GM13976 (cell line): ENCODE measurements at regions of chr3 and their contacts with region 1.

Region 1: GRCh38 chr3:33787328-33788009 is 11.0 kb upstream of the PDCD6IP start:
- DNase-seq: peak; percentile 55
- CTCF ChIP-seq: peak; percentile 75

Region 2: DNA sequence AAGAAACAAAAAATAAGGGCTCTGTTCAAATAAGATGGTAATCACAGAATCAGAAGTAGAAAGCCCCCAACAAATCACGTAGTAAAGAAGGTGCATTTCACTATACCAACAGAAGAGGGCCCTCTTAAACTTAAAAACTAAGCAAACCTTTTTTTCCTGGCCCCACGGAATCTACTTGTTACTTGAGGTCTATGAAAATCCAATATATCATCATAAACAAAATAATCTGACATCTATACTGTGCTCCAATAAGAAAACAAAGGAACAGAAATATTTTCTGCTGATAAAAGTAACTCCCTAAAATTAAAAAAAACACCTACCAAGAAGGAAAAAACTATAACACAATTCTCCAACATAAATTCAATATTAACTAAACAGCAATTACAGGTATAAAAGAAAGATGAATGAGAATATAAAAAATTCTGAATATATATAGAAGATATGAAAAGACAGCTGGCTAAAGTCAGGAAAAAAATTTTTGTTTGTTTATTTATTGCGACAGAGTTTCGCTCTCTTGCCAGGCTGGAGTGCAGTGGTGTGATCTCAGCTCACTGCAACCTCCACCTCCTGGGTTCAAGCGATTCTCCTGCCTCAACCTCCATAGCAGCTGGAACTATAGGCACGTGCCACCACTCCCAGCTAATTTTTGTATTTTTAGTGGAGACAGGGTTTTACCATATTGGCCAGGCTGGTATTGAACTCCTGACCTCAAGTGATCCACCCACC is 151.2 kb before region 1 on chr3:
- in situ Hi-C with region 1: loop called (anchors 10 kb)
- DNase-seq: peak; percentile 39
- CTCF ChIP-seq: peak; percentile 22

Region 3: DNA sequence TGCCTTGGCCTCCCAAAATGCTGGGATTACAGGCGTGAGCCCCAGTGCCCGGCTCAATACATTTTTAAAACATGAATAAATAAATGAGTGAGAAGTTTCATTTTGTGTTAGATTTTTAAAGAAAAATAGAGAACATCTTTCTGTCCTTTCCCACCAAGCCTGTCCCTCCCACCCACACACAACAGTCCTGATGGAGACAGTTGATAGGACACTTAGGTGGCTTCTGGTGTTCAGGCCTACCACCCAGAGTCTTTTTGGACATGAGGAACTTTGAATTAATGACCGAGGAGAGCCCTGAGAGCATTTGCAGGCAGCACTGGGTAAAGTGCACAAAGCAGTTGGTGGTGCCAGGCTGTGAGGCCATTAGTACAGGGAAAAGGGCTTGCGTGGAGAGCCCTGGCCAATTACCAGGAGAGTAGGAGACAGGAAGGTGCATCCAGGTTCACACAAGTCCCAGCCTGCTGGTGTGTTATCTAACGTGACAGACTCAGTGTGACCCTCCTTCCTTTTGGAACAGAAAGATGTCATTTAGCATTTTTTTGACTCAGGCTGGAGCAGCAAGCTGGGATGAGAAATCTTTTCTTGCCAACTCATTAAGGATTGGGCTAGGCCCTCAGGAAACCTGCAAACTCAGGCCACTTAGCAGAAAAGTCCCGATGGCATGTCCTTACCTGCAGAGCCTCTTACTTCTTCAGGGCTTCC is 114.5 kb after region 1 on chr3:
- in situ Hi-C with region 1: no loop called
- DNase-seq: no peak
- CTCF ChIP-seq: no peak